Heart left ventricle (tissue), 16 donors: ENCODE measurements at regions of chr20 and their contacts with region 1.

Region 1: DNA sequence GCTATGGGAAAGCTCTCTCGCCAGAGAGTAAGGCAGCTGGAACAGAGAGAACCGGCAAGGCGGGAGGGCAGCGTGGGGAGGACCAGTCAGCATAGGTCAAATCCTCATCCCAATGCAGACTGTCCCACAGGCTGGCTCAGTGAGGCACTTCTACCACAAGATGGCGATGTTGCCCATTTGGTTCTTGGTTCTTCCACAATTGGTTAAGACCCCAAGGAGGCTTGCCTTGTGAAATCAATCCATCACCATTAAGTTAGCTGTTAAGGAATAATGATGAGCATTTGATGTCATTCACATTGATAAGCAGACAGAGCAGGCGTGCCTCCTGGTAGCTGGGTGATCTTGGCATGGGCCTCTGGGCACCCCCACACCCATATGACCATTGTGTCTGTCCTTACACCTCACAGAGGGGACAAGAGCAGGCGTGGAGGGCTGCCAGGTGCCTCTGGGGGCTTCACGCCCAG is 2.4 kb downstream of the CSTL1 start:
- DNase-seq: peak in 4 of 5 donors; percentile 60 to 69 (median 62)
- ATAC-seq: peak; percentile 43 to 83 (median 80)
- H3K4me3 ChIP-seq: no peak overlapping the region
- H3K27ac ChIP-seq: no peak overlapping the region
- H3K4me1 ChIP-seq: peaks cover 0 to under 1% (median 0%) of the 10 kb centered on the region in 12 donors
- H3K27me3 ChIP-seq: no peaks in the 10 kb centered on the region
- CTCF ChIP-seq: peak; percentile 74 to 94 (median 85)
- POLR2A ChIP-seq: no peak

Region 2: GRCh38 chr20:22333885-22334545 is 1107.9 kb before region 1 on chr20:
- intact Hi-C with region 1: loop called in 2 of 10 experiments (anchors 5 to 10 kb)
- DNase-seq: peak in 3 of 5 donors; percentile 34 to 44 (median 36)
- ATAC-seq: peak in 3 of 4 donors; percentile 64 to 80 (median 66)
- H3K4me3 ChIP-seq: no peak overlapping the region
- H3K27ac ChIP-seq: no peak overlapping the region
- H3K4me1 ChIP-seq: no peaks in the 10 kb centered on the region
- H3K27me3 ChIP-seq: peaks cover 0 to 82% (median 4%) of the 10 kb centered on the region in 9 donors
- CTCF ChIP-seq: peak; percentile 54 to 79 (median 66)
- POLR2A ChIP-seq: no peak

Region 3: DNA sequence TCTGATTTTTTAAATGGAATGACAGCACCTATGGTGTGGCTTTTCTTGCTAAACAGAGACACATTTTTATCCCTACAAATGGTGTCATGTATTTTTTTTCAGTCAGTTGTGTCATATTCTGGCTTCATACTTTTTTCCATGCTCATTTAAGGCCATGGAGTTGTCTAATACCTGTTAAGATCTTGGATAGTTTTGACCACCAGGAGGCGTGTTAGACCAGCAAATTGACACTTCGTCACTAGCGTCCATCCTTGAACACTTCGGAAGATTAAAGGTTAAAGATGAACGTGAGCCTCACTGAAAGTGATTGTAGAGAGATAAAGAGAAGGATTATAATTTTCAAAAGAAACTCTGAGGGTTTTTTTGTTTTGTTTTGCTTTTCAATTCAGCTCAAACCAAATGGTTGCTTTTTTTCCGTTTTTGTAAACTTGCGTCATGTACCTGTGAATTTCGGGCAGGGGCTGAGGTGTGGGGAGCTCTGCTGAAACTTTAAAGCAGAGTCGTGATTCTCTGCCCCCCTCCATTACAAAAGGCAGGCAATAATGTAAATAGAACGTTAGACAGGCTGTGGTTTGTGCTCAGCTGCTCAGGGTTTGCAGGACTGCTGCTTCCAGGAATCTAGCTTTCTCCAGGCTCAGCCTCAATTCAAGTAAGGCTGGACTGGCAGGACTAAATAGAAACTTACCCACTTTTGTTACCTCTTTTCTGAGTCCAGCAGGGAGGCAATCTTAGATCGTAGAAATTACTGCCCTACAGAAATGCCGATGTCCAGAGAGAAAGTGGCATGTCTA is 1102.6 kb before region 1 on chr20:
- intact Hi-C with region 1: loop called in 2 of 10 experiments (anchors 5 to 10 kb)
- DNase-seq: peak in 1 of 5 donors; percentile 31
- ATAC-seq: peak in 3 of 4 donors; percentile 34 to 59 (median 55)
- H3K4me3 ChIP-seq: no peak overlapping the region
- H3K27ac ChIP-seq: no peak overlapping the region
- H3K4me1 ChIP-seq: no peaks in the 10 kb centered on the region
- H3K27me3 ChIP-seq: peaks cover 0 to 57% (median 7%) of the 10 kb centered on the region in 9 donors
- CTCF ChIP-seq: peak; percentile 49 to 85 (median 73)
- POLR2A ChIP-seq: no peak

Region 4: GRCh38 chr20:22684072-22684762 is 757.7 kb before region 1 on chr20:
- intact Hi-C with region 1: loop called in 1 of 10 experiments (anchors 10 kb)
- DNase-seq: peak; percentile 54 to 71 (median 62)
- ATAC-seq: peak; percentile 57 to 85 (median 82)
- H3K4me3 ChIP-seq: no peak overlapping the region
- H3K27ac ChIP-seq: no peak overlapping the region
- H3K4me1 ChIP-seq: peaks cover 0 to 19% (median 4%) of the 10 kb centered on the region in 12 donors
- H3K27me3 ChIP-seq: peaks cover 0 to 11% (median 0%) of the 10 kb centered on the region in 9 donors
- CTCF ChIP-seq: peak; percentile 77 to 91 (median 85)
- POLR2A ChIP-seq: no peak

Region 5: DNA sequence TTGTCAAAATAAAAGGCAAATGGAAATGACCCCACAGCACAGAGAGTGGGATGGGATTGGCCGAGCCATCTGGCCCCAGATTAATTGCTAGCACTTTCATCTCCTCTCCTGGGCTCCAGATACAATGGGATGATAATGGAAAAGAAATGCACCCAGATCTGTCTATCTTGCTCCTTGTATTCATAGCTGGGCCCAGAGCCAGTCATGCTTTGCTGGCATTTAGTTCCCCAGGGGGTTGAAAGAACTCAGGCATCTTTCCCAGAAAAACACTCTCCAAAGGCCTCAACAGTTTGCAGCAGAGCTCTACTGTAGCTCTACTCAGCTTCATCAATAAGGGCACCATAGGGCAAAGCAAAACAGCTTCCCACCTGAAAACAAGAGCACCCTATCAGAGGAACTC is 741.5 kb before region 1 on chr20:
- intact Hi-C with region 1: loop called in 1 of 10 experiments (anchors 10 kb)
- DNase-seq: no peak
- ATAC-seq: no peak
- H3K4me3 ChIP-seq: no peak overlapping the region
- H3K27ac ChIP-seq: no peak overlapping the region
- H3K4me1 ChIP-seq: peaks cover 0 to 15% (median under 1%) of the 10 kb centered on the region in 12 donors
- H3K27me3 ChIP-seq: no peaks in the 10 kb centered on the region
- CTCF ChIP-seq: no peak
- POLR2A ChIP-seq: no peak

Region 6: GRCh38 chr20:23606652-23607049 is 164.8 kb after region 1 on chr20:
- intact Hi-C with region 1: loop called (anchors 1 to 5 kb)
- DNase-seq: peak; percentile 69 to 88 (median 77)
- ATAC-seq: peak; percentile 71 to 95 (median 90)
- H3K4me3 ChIP-seq: no peak overlapping the region
- H3K27ac ChIP-seq: no peak overlapping the region
- H3K4me1 ChIP-seq: peaks cover 0 to 13% (median 0%) of the 10 kb centered on the region in 12 donors
- H3K27me3 ChIP-seq: peaks cover 0 to 8% (median 0%) of the 10 kb centered on the region in 9 donors
- CTCF ChIP-seq: peak; percentile 71 to 92 (median 88)
- POLR2A ChIP-seq: no peak

Region 7: DNA sequence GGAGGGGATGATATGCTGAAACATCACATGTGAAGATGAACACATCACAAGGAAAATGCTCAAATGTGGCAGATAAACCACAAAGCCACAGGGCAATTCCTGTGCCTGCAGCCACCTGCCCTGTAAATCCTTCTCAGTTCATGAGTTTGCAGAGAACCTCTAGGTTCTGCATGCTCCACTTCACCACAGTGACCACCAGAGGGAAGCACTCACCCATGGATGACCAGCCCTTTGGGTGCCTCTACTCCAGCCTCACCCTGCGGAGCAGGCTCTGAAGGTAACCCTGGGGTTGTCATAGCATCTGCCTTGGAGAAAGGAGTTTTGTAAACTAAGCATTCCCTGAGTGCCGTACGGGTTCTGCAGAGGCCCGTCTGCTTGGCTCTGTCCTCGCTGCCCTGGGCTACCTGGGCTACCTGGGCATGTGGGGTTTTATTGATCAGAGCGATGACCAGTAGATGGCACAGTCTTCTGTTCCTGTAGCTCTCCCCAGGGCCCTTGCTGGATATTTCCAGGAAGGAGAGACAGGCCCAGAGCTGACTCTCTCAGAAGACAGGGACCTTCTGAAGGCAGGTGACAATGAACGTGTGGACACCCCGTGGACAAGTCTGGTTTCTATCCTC is 340.6 kb after region 1 on chr20:
- intact Hi-C with region 1: loop called in 1 of 10 experiments (anchors 5 kb)
- DNase-seq: no peak
- ATAC-seq: peak in 3 of 4 donors; percentile 65 to 75 (median 69)
- H3K4me3 ChIP-seq: no peak overlapping the region
- H3K27ac ChIP-seq: no peak overlapping the region
- H3K4me1 ChIP-seq: no peaks in the 10 kb centered on the region
- H3K27me3 ChIP-seq: peaks cover 0 to 7% (median 0%) of the 10 kb centered on the region in 9 donors
- CTCF ChIP-seq: peak; percentile 32 to 56 (median 53)
- POLR2A ChIP-seq: no peak